ENCODE measurements at regions of chr17 and their contacts with region 1.

Region 1: GRCh38 chr17:55852734-55853133 is 101.9 kb downstream of the PCTP start:
- DNase-seq: no peak
- ATAC-seq: no peak
- H3K4me3 Mint-ChIP-seq: no peak overlapping the region
- H3K27ac Mint-ChIP-seq: no peak overlapping the region
- H3K4me1 Mint-ChIP-seq: no peaks in the 10 kb centered on the region
- H3K27me3 Mint-ChIP-seq: no peaks in the 10 kb centered on the region
- CTCF ChIP-seq: no peak

Region 2: DNA sequence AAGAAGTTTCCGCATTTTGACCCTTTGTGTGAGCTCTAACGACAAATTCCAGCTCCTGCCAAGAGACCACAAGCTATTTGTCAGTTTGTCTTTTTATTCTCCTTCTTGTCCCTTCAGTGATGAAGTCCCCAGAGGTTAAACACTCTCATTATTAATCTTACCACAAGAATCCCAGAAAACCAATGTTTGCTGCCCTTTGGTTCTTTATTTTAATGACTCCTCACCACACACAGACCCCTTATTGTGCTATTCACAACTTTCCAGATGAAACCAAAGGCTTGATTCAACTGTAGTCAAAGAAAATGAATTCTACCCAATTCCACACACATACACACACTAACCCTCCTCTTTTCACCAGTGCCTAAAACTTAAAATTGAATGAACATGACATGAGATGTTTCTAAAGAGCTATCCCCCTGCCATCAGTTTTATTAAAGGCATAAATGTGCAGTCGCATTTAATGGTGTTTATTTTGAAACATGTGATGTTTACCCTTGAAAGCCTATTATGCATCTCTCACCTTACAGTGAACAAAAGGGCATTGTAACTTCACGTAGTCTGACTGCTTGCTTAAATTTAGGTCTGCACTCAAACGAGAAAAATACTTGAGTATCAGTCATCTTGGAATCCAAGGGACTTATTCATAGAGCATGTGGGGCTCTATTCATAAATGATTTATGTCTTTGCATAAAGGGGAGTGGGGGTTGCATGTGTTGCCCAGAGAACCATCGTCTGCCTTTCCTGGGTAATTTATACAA is 57.8 kb before region 1 on chr17:
- CTCF ChIA-PET with region 1: no interaction called
- POLR2A ChIA-PET with region 1: no interaction called
- intact Hi-C with region 1: loop called (anchors 10 kb)
- DNase-seq: no peak
- ATAC-seq: no peak
- H3K4me3 Mint-ChIP-seq: no peak overlapping the region
- H3K27ac Mint-ChIP-seq: no peak overlapping the region
- H3K4me1 Mint-ChIP-seq: no peaks in the 10 kb centered on the region
- H3K27me3 Mint-ChIP-seq: peaks cover 4% of the 10 kb centered on the region
- CTCF ChIP-seq: no peak

Measured in activated CD8-positive, alpha-beta T cell treated with anti-CD3 and anti-CD28 coated beads for 36 hours (primary cell).